ENCODE measurements at regions of chr3 and their contacts with region 1.

Region 1: GRCh38 chr3:30269751-30270445 is 336.5 kb upstream of the TGFBR2 start:
- DNase-seq: no peak
- H3K4me3 ChIP-seq: no peak overlapping the region
- H3K27ac ChIP-seq: peak overlapping the region in 2 of 4 donors; percentile 71 to 76
- H3K4me1 ChIP-seq: peaks cover 0 to 50% (median 15%) of the 10 kb centered on the region in 4 donors
- H3K27me3 ChIP-seq: no peaks in the 10 kb centered on the region
- CTCF ChIP-seq: no peak
- EP300 ChIP-seq: no peak
- POLR2A ChIP-seq: no peak

Region 2: GRCh38 chr3:29746163-29746562 is 523.7 kb before region 1 on chr3:
- intact Hi-C with region 1: no loop called
- DNase-seq: no peak
- H3K4me3 ChIP-seq: no peak overlapping the region
- H3K27ac ChIP-seq: peak overlapping the region in 1 of 4 donors; percentile 15
- H3K4me1 ChIP-seq: peaks cover 0 to 7% (median 5%) of the 10 kb centered on the region in 4 donors
- H3K27me3 ChIP-seq: no peaks in the 10 kb centered on the region
- CTCF ChIP-seq: no peak
- EP300 ChIP-seq: no peak
- POLR2A ChIP-seq: no peak

Region 3: DNA sequence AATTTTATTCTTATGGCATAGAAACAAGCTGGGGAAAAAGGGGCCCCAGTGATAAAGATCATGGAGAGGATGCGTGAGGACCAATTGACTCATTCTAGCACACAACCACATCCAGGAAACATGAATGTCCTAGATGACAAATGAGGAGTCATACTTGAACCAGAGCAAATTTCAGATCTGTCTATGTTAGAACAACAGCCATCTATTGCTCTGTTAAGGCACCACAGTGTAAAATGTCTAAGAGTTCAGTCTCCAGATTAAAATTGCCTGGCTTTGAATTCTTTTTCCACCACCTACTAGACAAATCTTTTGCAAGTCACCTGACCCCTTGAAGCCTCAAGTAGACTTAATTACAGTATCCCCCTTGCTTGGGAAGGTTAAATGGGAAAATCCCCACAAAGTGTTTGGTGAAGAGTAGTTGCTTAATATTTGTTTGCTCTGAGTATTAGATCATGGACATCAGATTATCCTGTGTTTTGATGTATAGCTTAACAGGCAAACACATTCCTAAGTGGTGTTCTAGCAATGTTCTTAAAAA is 77.8 kb after region 1 on chr3:
- intact Hi-C with region 1: loop called (anchors 10 kb)
- DNase-seq: no peak
- H3K4me3 ChIP-seq: no peak overlapping the region
- H3K27ac ChIP-seq: no peak overlapping the region
- H3K4me1 ChIP-seq: peaks cover 0 to 23% (median 17%) of the 10 kb centered on the region in 4 donors
- H3K27me3 ChIP-seq: no peaks in the 10 kb centered on the region
- CTCF ChIP-seq: no peak
- EP300 ChIP-seq: no peak
- POLR2A ChIP-seq: no peak

Region 4: GRCh38 chr3:30470496-30470895 is 200.6 kb after region 1 on chr3:
- intact Hi-C with region 1: no loop called
- DNase-seq: no peak
- H3K4me3 ChIP-seq: no peak overlapping the region
- H3K27ac ChIP-seq: peak overlapping the region in 1 of 4 donors; percentile 65
- H3K4me1 ChIP-seq: peaks cover 0 to 22% (median 15%) of the 10 kb centered on the region in 4 donors
- H3K27me3 ChIP-seq: no peaks in the 10 kb centered on the region
- CTCF ChIP-seq: no peak
- EP300 ChIP-seq: no peak
- POLR2A ChIP-seq: no peak